SK-N-SH (cell line): ENCODE measurements at regions of chr18 and their contacts with region 1.

Region 1: DNA sequence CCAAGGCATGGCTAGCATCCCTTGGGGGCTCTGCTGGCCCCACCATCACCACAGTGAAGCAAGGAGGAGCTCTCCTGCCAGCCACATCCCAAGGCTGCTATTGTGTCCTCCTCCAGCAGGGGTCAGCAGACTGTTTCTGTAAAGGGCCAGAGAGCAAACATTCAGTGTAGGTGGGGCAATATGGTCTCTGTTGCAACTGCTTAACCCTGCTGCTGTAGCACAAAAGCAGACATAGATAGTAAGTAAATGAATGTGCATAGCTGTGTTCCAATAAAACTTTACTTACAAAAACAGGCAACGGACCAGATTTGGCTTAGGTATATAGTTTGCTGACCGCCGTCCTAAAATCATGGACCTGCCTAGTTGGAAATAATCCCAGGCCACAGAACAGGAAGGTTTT is 36.4 kb upstream of the ZBTB7C start:
- DNase-seq: peak; percentile 66
- H3K4me3 ChIP-seq: peak overlapping the region in 1 of 2 experiments; percentile 21; a peak in 1 of 4 replicates
- H3K27ac ChIP-seq: peak overlapping the region in 1 of 2 experiments; percentile 22; a peak in 1 of 4 replicates
- H3K4me1 ChIP-seq: peaks cover 0 to 21% of the 10 kb centered on the region in 2 experiments; a peak in 1 of 4 replicates
- H3K27me3 ChIP-seq: peaks cover 56% of the 10 kb centered on the region; the same call in 1 of the 2 replicates
- CTCF ChIP-seq: peak; percentile 88
- EP300 ChIP-seq: no peak
- RAD21 ChIP-seq: peak; percentile 68

Region 2: GRCh38 chr18:48022531-48023329 is 422.8 kb before region 1 on chr18:
- CTCF ChIA-PET with region 1: interaction called, 333 read pairs
- POLR2A ChIA-PET with region 1: interaction called, 3 read pairs
- DNase-seq: peak; percentile 58
- H3K4me3 ChIP-seq: no peak overlapping the region
- H3K27ac ChIP-seq: peak overlapping the region; percentile 45 to 97
- H3K4me1 ChIP-seq: peaks cover 5 to 33% of the 10 kb centered on the region in 2 experiments; a peak in 3 of 4 replicates
- H3K27me3 ChIP-seq: peaks cover 22% of the 10 kb centered on the region
- CTCF ChIP-seq: peak; percentile 60
- EP300 ChIP-seq: no peak
- RAD21 ChIP-seq: peak; percentile 77

Region 3: GRCh38 chr18:48404716-48405507 is 40.6 kb before region 1 on chr18:
- CTCF ChIA-PET with region 1: interaction called, 13 read pairs
- POLR2A ChIA-PET with region 1: no interaction called
- DNase-seq: peak; percentile 42
- H3K4me3 ChIP-seq: no peak overlapping the region
- H3K27ac ChIP-seq: no peak overlapping the region
- H3K4me1 ChIP-seq: peaks cover 0 to 35% of the 10 kb centered on the region in 2 experiments; a peak in 1 of 4 replicates
- H3K27me3 ChIP-seq: peaks cover 17% of the 10 kb centered on the region
- CTCF ChIP-seq: no peak
- EP300 ChIP-seq: no peak
- RAD21 ChIP-seq: no peak

Region 4: DNA sequence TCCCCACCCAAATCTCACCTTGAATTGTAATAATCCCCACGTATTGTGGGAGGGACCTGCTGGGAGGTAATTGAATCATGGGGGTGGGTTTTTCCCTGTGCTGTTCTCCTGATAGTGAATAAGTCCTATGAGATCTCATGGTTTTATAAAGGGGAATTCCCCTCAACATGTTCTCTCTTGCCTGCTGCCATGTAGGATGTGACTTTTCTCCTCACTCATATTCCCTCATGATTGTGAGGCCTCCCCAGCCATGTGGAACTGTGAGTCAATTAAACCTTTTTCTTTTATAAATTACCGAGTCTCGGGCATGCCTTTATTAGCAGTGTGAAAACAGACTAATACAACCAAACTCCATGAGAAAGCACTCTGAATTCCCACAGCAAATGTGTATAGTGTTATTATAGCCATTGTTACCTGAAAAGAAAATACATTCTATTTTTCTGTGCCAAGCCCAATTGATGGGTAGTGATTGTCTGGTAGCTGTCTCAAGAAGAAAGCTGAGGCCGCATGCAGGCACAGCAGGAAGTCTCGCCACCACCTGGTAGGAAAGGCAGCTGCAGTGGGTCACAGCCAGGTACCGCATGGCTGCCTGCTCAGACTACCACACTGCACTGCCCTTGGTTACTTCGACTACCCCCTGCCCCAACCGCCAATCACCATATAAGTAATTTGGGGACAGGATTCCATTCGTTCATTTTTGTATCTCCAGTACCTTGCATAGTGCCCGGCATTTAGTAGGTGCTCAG is 26.1 kb before region 1 on chr18:
- CTCF ChIA-PET with region 1: interaction called, 27 read pairs
- POLR2A ChIA-PET with region 1: no interaction called
- DNase-seq: no peak
- H3K4me3 ChIP-seq: no peak overlapping the region
- H3K27ac ChIP-seq: no peak overlapping the region
- H3K4me1 ChIP-seq: peaks cover 0 to 4% of the 10 kb centered on the region in 2 experiments; a peak in 1 of 4 replicates
- H3K27me3 ChIP-seq: peaks cover 25% of the 10 kb centered on the region; the same call in 1 of the 2 replicates
- CTCF ChIP-seq: no peak; the same call in 1 of the 2 replicates
- EP300 ChIP-seq: no peak
- RAD21 ChIP-seq: no peak

Region 5: DNA sequence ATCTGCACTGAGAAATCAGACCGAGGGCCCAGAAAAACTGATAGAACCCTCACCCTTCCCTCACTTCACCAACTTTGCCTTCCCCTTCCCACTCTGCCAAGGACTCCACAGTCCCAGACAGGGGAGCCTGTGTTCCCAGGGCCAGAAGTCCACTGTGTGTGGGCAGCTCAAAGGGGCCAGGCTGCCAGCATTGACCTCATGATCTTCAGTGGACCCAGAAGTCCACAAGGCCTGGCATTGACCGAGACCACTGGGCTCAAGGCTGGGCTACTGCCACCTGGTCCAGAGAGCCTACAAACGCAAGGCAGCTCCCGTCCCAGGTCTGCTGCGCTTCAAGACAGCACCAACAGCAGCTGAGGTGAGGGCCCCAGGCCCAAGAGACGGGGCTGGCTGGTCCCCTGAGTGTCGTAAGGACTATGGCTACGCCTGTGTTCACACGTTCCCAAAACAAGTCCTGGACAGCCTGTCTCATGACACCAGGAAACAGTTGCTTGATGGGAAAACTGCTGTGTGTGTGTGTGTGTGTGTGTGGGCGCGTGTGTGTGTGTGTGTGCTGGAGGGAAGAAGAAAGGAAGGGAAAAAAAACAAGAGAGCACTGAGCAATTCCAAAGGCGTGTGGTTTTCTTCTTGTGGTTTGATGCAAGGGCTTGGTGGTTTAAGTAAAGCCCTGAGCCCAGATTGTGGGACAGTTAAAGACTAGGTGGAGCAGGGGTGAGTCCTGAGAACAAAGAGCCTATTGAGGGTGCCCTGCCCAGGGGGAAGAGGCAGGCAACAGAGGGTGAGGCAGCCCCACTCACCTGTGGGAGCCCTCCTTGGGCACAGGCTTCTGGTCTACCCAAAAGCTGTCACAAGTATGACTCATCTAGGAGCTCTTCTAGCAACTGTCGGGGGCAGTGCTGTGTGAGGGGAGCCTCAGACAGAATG is 10.3 kb after region 1 on chr18:
- CTCF ChIA-PET with region 1: interaction called, 164 read pairs
- POLR2A ChIA-PET with region 1: no interaction called
- DNase-seq: no peak
- H3K4me3 ChIP-seq: no peak overlapping the region
- H3K27ac ChIP-seq: no peak overlapping the region
- H3K4me1 ChIP-seq: peaks cover 0 to 24% of the 10 kb centered on the region in 2 experiments; a peak in 1 of 4 replicates
- H3K27me3 ChIP-seq: no peaks in the 10 kb centered on the region; the same call in 1 of the 2 replicates
- CTCF ChIP-seq: no peak
- EP300 ChIP-seq: no peak
- RAD21 ChIP-seq: no peak